Panc1 (cell line): ENCODE measurements at regions of chr7 and their contacts with region 1.

Region 1: GRCh38 chr7:92833024-92833765 is 3.2 kb downstream of the CDK6 start:
- DNase-seq: peak; percentile 82
- ATAC-seq: peak; percentile 69
- H3K4me3 ChIP-seq: peak overlapping the region; percentile 94 to 97
- H3K27ac ChIP-seq: peak overlapping the region; percentile 97
- H3K4me1 ChIP-seq: peaks cover 40% of the 10 kb centered on the region
- H3K27me3 ChIP-seq: no peaks in the 10 kb centered on the region; the same call in 1 of the 2 replicates
- CTCF ChIP-seq: peak; percentile 92

Region 2: GRCh38 chr7:92609921-92610518 is 223.2 kb before region 1 on chr7:
- CTCF ChIA-PET with region 1: no interaction called
- POLR2A ChIA-PET with region 1: interaction called, 12 read pairs
- in situ Hi-C with region 1: no loop called
- intact Hi-C with region 1: no loop called
- DNase-seq: no peak
- ATAC-seq: peak; percentile 74
- H3K4me3 ChIP-seq: no peak overlapping the region
- H3K27ac ChIP-seq: no peak overlapping the region
- H3K4me1 ChIP-seq: no peaks in the 10 kb centered on the region
- H3K27me3 ChIP-seq: no peaks in the 10 kb centered on the region
- CTCF ChIP-seq: peak; percentile 53; the same call in 1 of the 2 replicates

Region 3: GRCh38 chr7:92691578-92691977 is 141.6 kb before region 1 on chr7:
- CTCF ChIA-PET with region 1: interaction called, 4 read pairs
- POLR2A ChIA-PET with region 1: interaction called, 5 read pairs
- in situ Hi-C with region 1: no loop called
- intact Hi-C with region 1: loop called (anchors 1 kb)
- DNase-seq: peak; percentile 61
- ATAC-seq: peak; percentile 62
- H3K4me3 ChIP-seq: no peak overlapping the region
- H3K27ac ChIP-seq: peak overlapping the region; percentile 65
- H3K4me1 ChIP-seq: peaks cover 22% of the 10 kb centered on the region
- H3K27me3 ChIP-seq: no peaks in the 10 kb centered on the region
- CTCF ChIP-seq: peak; percentile 66; the same call in 1 of the 2 replicates

Region 4: GRCh38 chr7:92809397-92810241 is 23.6 kb before region 1 on chr7:
- CTCF ChIA-PET with region 1: no interaction called
- POLR2A ChIA-PET with region 1: no interaction called
- in situ Hi-C with region 1: no loop called
- intact Hi-C with region 1: no loop called
- DNase-seq: peak; percentile 92
- ATAC-seq: peak; percentile 94
- H3K4me3 ChIP-seq: peak overlapping the region in 1 of 2 experiments; percentile 14; a peak in 2 of 4 replicates
- H3K27ac ChIP-seq: peak overlapping the region; percentile 99
- H3K4me1 ChIP-seq: peaks cover 52% of the 10 kb centered on the region
- H3K27me3 ChIP-seq: no peaks in the 10 kb centered on the region
- CTCF ChIP-seq: no peak

Region 5: DNA sequence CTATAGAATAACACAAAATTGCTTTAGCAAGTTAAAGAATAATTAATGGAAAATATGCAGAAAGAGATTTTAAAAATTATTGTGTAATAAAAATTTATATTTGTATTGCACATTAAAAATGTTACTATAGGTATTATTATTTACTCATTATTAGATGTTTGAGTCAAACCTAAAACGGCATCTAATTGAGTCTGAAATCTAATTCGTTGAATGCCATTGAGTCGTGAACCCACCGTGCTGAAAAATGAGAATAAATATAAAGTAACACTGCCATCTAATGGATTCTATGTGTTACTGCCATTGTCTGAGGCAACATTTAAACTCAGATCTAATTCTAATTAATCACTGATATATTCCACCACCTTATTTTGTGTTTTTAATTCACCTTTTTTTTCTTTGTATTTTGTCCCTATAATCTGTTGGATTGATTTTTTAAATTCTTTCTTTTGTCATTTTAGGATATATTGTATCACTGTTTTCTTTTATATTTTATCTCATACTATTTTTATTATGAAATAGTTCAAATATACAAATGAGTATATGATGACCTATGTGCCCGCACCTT is 222.4 kb after region 1 on chr7:
- CTCF ChIA-PET with region 1: interaction called, 4 read pairs
- POLR2A ChIA-PET with region 1: no interaction called
- in situ Hi-C with region 1: no loop called
- intact Hi-C with region 1: loop called (anchors 1 kb)
- DNase-seq: peak; percentile 22
- ATAC-seq: 0 out of 2 replicates have a peak, but pooled peaks have one; percentile 56
- H3K4me3 ChIP-seq: no peak overlapping the region
- H3K27ac ChIP-seq: peak overlapping the region; percentile 64; the same call in 1 of the 2 replicates
- H3K4me1 ChIP-seq: peaks cover 30% of the 10 kb centered on the region
- H3K27me3 ChIP-seq: 0 out of 2 replicates have a peak, but pooled peaks cover 3% of the 10 kb centered on the region
- CTCF ChIP-seq: peak; percentile 75; the same call in 1 of the 2 replicates